ENCODE measurements at regions of chr12 and their contacts with region 1.

Region 1: DNA sequence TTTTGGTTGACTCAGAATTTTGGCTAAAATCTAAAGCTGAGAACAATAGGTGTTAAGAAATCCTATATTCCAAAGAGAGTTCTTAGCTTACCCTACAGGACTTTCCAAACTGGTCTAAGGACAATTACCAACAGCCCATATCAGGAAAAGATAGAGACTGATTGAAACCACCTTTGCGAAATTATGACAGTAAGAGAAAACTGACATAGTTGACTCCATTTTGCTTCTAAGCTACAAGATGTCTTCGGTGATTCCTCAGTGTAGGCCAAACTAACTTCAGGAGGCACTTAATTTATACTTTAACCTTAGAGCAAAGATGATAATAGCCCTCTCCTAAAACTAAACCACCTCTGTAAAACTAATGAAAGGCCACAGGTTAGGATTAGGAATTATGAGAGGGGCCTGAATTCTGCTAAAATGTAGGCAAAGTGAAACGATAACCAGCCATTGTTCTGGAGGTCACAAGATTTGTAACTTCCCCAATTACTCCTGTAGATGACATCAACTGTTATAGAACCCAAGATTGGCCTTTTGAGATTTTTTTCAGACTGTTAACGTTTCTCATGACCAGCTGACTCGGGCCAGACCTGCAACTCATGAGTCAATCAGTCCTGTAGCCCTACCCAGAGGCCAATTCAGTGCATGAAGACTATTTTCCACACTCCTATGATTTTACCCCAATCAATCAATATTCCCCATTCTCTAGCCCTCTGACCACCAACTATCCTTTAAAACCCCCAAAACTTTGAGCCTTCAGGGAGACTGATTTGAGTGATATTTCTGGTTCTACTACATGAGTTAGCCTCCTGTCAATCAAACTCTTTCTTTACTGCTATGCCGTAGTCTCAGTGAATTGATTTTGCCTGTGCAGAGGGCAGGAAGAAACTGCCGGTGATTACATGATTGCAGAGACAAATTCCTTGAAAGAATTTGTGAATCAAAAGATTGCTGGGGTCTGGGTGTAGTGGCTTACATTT is 43.1 kb downstream of the KLRG1 start:
- DNase-seq: no peak
- H3K4me3 ChIP-seq: no peak overlapping the region
- H3K27ac ChIP-seq: no peak overlapping the region
- H3K4me1 ChIP-seq: no peaks in the 10 kb centered on the region
- H3K27me3 ChIP-seq: no peaks in the 10 kb centered on the region
- CTCF ChIP-seq: no peak
- EP300 ChIP-seq: no peak
- POLR2A ChIP-seq: no peak

Region 2: GRCh38 chr12:8956772-8957171 is 75.7 kb before region 1 on chr12:
- intact Hi-C with region 1: loop called in 3 of 4 experiments (anchors 5 to 10 kb)
- DNase-seq: no peak
- H3K4me3 ChIP-seq: no peak overlapping the region
- H3K27ac ChIP-seq: no peak overlapping the region
- H3K4me1 ChIP-seq: no peaks in the 10 kb centered on the region
- H3K27me3 ChIP-seq: no peaks in the 10 kb centered on the region
- CTCF ChIP-seq: no peak
- EP300 ChIP-seq: no peak
- POLR2A ChIP-seq: no peak

Region 3: GRCh38 chr12:10501031-10501430 is 1468.5 kb after region 1 on chr12:
- intact Hi-C with region 1: no loop called
- DNase-seq: no peak
- H3K4me3 ChIP-seq: no peak overlapping the region
- H3K27ac ChIP-seq: no peak overlapping the region
- H3K4me1 ChIP-seq: no peaks in the 10 kb centered on the region
- H3K27me3 ChIP-seq: no peaks in the 10 kb centered on the region
- CTCF ChIP-seq: no peak
- EP300 ChIP-seq: no peak
- POLR2A ChIP-seq: no peak